ENCODE measurements at regions of chr20 and their contacts with region 1.

Region 1: DNA sequence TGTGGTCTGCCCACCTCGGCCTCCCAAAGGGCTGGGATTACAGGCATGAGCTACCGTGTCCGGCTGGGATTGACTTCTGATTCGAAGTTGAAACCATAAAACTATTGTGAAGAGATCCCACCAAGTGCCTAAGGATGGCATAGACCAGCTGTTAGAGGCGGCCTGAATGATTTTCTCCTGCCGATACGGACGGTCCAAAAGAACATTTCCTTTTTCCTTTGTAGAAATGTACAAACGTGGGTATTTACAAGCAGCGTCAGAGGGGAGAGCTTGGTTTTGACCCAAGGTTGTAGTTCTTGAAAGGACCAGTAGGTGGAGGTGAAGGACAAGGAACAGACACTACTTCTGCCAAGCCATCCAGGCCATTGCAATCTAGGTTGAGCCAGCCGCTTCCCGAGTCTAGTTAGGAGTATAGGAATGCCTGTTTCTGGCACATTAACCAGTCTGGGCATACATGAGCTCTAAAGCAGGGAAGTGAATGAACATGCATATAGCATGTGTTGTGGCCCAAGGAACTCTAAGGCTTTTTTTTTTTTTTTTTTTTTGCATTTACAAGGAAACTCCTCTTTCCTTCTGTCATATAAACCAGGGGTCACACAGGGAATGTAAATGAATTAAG is 29.1 kb downstream of the MOCS3 start:
- DNase-seq: peak; percentile 79
- H3K4me3 ChIP-seq: no peak overlapping the region; a peak in 1 of 4 replicates
- H3K27ac ChIP-seq: peak overlapping the region in 1 of 2 experiments; percentile 32; a peak in 1 of 4 replicates
- H3K4me1 ChIP-seq: no peaks in the 10 kb centered on the region
- H3K27me3 ChIP-seq: no peaks in the 10 kb centered on the region
- CTCF ChIP-seq: peak; percentile 85
- EP300 ChIP-seq: no peak
- RAD21 ChIP-seq: peak; percentile 99

Region 2: DNA sequence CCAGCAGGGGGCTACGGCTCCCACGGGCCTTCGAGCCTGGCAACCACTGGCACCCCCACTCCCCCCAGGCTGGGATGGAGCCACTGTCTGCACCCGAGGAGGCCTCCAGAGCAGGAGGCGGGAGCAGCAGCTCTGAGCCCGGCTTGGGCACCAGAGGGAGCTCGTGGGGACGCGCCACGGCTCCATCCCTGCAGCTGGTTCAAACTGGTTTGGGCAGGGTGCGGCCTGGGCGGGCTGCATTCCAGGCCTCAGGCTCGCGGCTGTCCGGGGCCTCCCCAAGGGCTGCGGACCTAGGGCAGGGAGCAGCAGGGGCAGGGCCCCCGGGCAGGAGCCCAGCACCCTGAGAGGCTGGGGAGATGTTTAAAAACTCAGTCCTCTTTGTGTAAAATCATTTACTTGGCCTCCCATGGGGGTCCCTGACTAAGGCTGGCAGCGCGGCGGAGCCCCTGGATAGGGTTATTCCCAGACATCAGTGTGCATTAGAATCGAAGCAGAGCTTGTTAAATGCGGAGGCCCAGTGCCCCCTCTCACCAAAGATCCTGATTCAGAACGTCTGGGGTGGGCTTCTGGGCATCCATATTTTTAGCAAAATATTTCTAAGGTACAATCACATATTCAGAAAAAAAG is 196.9 kb before region 1 on chr20:
- CTCF ChIA-PET with region 1: interaction called, 11 read pairs
- POLR2A ChIA-PET with region 1: no interaction called
- DNase-seq: peak; percentile 94
- H3K4me3 ChIP-seq: no peak overlapping the region; a peak in 1 of 4 replicates
- H3K27ac ChIP-seq: peak overlapping the region; percentile 73 to 80
- H3K4me1 ChIP-seq: peaks cover 12 to 21% of the 10 kb centered on the region in 2 experiments
- H3K27me3 ChIP-seq: no peaks in the 10 kb centered on the region
- CTCF ChIP-seq: peak; percentile 74
- EP300 ChIP-seq: peak; percentile 30 to 36; a peak in 2 of 4 replicates
- RAD21 ChIP-seq: peak; percentile 40

Region 3: GRCh38 chr20:51001758-51002157 is 14.1 kb after region 1 on chr20:
- CTCF ChIA-PET with region 1: interaction called, 26 read pairs
- POLR2A ChIA-PET with region 1: no interaction called
- DNase-seq: no peak
- H3K4me3 ChIP-seq: no peak overlapping the region
- H3K27ac ChIP-seq: no peak overlapping the region
- H3K4me1 ChIP-seq: no peaks in the 10 kb centered on the region
- H3K27me3 ChIP-seq: no peaks in the 10 kb centered on the region
- CTCF ChIP-seq: no peak
- EP300 ChIP-seq: no peak
- RAD21 ChIP-seq: no peak

Region 4: GRCh38 chr20:51087266-51087665 is 99.6 kb after region 1 on chr20:
- CTCF ChIA-PET with region 1: no interaction called
- POLR2A ChIA-PET with region 1: no interaction called
- DNase-seq: no peak
- H3K4me3 ChIP-seq: no peak overlapping the region
- H3K27ac ChIP-seq: no peak overlapping the region
- H3K4me1 ChIP-seq: peaks cover 0 to 11% of the 10 kb centered on the region in 2 experiments; a peak in 2 of 4 replicates
- H3K27me3 ChIP-seq: peaks cover 46% of the 10 kb centered on the region
- CTCF ChIP-seq: no peak
- EP300 ChIP-seq: no peak
- RAD21 ChIP-seq: no peak

Region 5: GRCh38 chr20:51295575-51295974 is 307.9 kb after region 1 on chr20:
- CTCF ChIA-PET with region 1: interaction called, 16 read pairs
- POLR2A ChIA-PET with region 1: no interaction called
- DNase-seq: no peak
- H3K4me3 ChIP-seq: no peak overlapping the region
- H3K27ac ChIP-seq: no peak overlapping the region
- H3K4me1 ChIP-seq: peaks cover 0 to 7% of the 10 kb centered on the region in 2 experiments; a peak in 1 of 4 replicates
- H3K27me3 ChIP-seq: no peaks in the 10 kb centered on the region
- CTCF ChIP-seq: no peak
- EP300 ChIP-seq: no peak
- RAD21 ChIP-seq: no peak

Region 6: GRCh38 chr20:51326201-51326819 is 338.6 kb after region 1 on chr20:
- CTCF ChIA-PET with region 1: interaction called, 163 read pairs
- POLR2A ChIA-PET with region 1: no interaction called
- DNase-seq: peak; percentile 52
- H3K4me3 ChIP-seq: no peak overlapping the region
- H3K27ac ChIP-seq: peak overlapping the region in 1 of 2 experiments; percentile 98; a peak in 2 of 4 replicates
- H3K4me1 ChIP-seq: 0 out of 4 replicates have a peak, but pooled peaks cover 0 to 3% of the 10 kb centered on the region in 2 experiments
- H3K27me3 ChIP-seq: no peaks in the 10 kb centered on the region
- CTCF ChIP-seq: peak; percentile 52
- EP300 ChIP-seq: no peak
- RAD21 ChIP-seq: peak; percentile 51

Region 7: DNA sequence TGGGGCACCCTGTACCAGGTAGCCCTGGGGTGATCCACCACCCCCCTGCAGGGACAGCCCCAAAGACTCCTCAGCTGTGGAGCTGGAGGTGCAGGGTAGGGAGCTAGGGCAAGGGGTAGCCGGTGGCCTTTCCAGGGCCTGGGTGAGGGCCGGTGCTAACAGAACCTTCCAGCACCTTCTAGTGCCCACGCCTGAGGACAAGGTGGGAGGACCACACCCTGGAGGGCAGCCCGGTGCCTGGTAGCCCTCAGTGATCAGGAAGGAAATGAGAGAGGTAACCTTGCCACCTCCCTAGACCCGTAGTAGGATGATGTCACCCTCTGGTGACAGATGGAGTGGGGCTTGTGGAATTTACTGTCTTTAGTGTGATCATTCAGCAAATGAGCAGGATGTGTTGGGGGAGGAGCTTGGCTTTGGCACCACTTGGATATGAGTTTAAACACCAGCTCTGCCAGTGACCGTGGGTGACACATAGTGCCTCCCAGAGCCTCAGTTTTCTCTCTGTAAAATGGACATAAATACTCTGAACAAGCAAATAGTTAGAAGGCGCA is 367.1 kb after region 1 on chr20:
- CTCF ChIA-PET with region 1: interaction called, 15 read pairs
- POLR2A ChIA-PET with region 1: no interaction called
- DNase-seq: no peak
- H3K4me3 ChIP-seq: no peak overlapping the region
- H3K27ac ChIP-seq: peak overlapping the region in 1 of 2 experiments; percentile 87; a peak in 2 of 4 replicates
- H3K4me1 ChIP-seq: peaks cover 0 to 22% of the 10 kb centered on the region in 2 experiments; a peak in 2 of 4 replicates
- H3K27me3 ChIP-seq: no peaks in the 10 kb centered on the region
- CTCF ChIP-seq: no peak
- EP300 ChIP-seq: no peak
- RAD21 ChIP-seq: no peak

Region 8: GRCh38 chr20:51378171-51378929 is 390.6 kb after region 1 on chr20:
- CTCF ChIA-PET with region 1: interaction called, 27 read pairs
- POLR2A ChIA-PET with region 1: no interaction called
- DNase-seq: no peak
- H3K4me3 ChIP-seq: no peak overlapping the region
- H3K27ac ChIP-seq: no peak overlapping the region
- H3K4me1 ChIP-seq: peaks cover 0 to 19% of the 10 kb centered on the region in 2 experiments; a peak in 2 of 4 replicates
- H3K27me3 ChIP-seq: no peaks in the 10 kb centered on the region
- CTCF ChIP-seq: peak; percentile 31
- EP300 ChIP-seq: no peak
- RAD21 ChIP-seq: peak; percentile 51